ENCODE measurements at regions of chr20 and their contacts with region 1.

Region 1: DNA sequence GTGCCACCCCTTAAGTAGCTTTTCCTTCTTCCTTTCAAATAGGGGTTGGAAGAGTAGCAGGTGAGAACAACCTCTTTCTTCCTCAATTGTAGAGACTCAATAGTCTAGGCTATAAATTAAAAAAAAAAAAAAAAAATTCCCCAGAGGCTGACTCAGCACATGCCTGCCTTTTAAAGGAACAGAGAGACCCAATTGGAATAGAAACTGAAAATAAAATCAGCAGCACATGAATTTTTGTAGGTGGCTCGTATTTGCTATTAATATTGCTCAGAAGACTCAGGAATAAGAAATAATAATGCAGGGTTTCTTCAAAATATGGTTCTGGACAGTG is 19.3 kb downstream of the TOP1 start:
- DNase-seq: no peak
- H3K4me3 Mint-ChIP-seq: peak overlapping the region; percentile 48
- H3K27ac Mint-ChIP-seq: peak overlapping the region; percentile 55
- H3K4me1 Mint-ChIP-seq: peaks cover 89% of the 10 kb centered on the region
- H3K27me3 Mint-ChIP-seq: no peaks in the 10 kb centered on the region
- CTCF ChIP-seq: no peak

Region 2: GRCh38 chr20:41065716-41066115 is 17.8 kb after region 1 on chr20:
- CTCF ChIA-PET with region 1: interaction called, 12 read pairs
- intact Hi-C with region 1: no loop called
- DNase-seq: no peak
- H3K4me3 Mint-ChIP-seq: no peak overlapping the region
- H3K27ac Mint-ChIP-seq: no peak overlapping the region
- H3K4me1 Mint-ChIP-seq: peaks cover 54% of the 10 kb centered on the region
- H3K27me3 Mint-ChIP-seq: no peaks in the 10 kb centered on the region
- CTCF ChIP-seq: no peak